Vagina (tissue), 2 donors: ENCODE measurements at regions of chr2 and their contacts with region 1.

Region 1: GRCh38 chr2:184517402-184517801 is 80.9 kb upstream of the ZNF804A start:
- DNase-seq: no peak
- H3K4me3 ChIP-seq: no peak overlapping the region
- H3K27ac ChIP-seq: no peak overlapping the region
- H3K4me1 ChIP-seq: no peaks in the 10 kb centered on the region
- H3K27me3 ChIP-seq: no peaks in the 10 kb centered on the region
- CTCF ChIP-seq: no peak
- POLR2A ChIP-seq: no peak

Region 2: GRCh38 chr2:183543731-183544130 is 973.7 kb before region 1 on chr2:
- intact Hi-C with region 1: no loop called
- DNase-seq: no peak
- H3K4me3 ChIP-seq: no peak overlapping the region
- H3K27ac ChIP-seq: no peak overlapping the region
- H3K4me1 ChIP-seq: no peaks in the 10 kb centered on the region
- H3K27me3 ChIP-seq: no peaks in the 10 kb centered on the region
- CTCF ChIP-seq: no peak
- POLR2A ChIP-seq: no peak

Region 3: GRCh38 chr2:184562532-184562931 is 45.1 kb after region 1 on chr2:
- intact Hi-C with region 1: loop called (anchors 1 kb)
- DNase-seq: no peak
- H3K4me3 ChIP-seq: no peak overlapping the region
- H3K27ac ChIP-seq: no peak overlapping the region
- H3K4me1 ChIP-seq: no peaks in the 10 kb centered on the region
- H3K27me3 ChIP-seq: no peaks in the 10 kb centered on the region
- CTCF ChIP-seq: no peak
- POLR2A ChIP-seq: no peak